ENCODE measurements at regions of chr16 and their contacts with region 1.

Region 1: GRCh38 chr16:67942200-67942509 is 1.8 kb downstream of the LCAT start:
- DNase-seq: peak; percentile 78
- ATAC-seq: peak; percentile 83
- H3K4me3 Mint-ChIP-seq: no peak overlapping the region
- H3K27ac Mint-ChIP-seq: no peak overlapping the region
- H3K4me1 Mint-ChIP-seq: peaks cover 7% of the 10 kb centered on the region
- H3K27me3 Mint-ChIP-seq: no peaks in the 10 kb centered on the region
- CTCF ChIP-seq: peak; percentile 63

Region 2: GRCh38 chr16:67967958-67968399 is 25.8 kb after region 1 on chr16:
- CTCF ChIA-PET with region 1: interaction called, 19 read pairs
- POLR2A ChIA-PET with region 1: no interaction called
- DNase-seq: peak; percentile 38
- ATAC-seq: no peak
- H3K4me3 Mint-ChIP-seq: peak overlapping the region; percentile 97
- H3K27ac Mint-ChIP-seq: peak overlapping the region; percentile 92; the same call in 1 of the 2 replicates
- H3K4me1 Mint-ChIP-seq: peaks cover 44% of the 10 kb centered on the region
- H3K27me3 Mint-ChIP-seq: peaks cover 5% of the 10 kb centered on the region; the same call in 1 of the 2 replicates
- CTCF ChIP-seq: no peak

Region 3: DNA sequence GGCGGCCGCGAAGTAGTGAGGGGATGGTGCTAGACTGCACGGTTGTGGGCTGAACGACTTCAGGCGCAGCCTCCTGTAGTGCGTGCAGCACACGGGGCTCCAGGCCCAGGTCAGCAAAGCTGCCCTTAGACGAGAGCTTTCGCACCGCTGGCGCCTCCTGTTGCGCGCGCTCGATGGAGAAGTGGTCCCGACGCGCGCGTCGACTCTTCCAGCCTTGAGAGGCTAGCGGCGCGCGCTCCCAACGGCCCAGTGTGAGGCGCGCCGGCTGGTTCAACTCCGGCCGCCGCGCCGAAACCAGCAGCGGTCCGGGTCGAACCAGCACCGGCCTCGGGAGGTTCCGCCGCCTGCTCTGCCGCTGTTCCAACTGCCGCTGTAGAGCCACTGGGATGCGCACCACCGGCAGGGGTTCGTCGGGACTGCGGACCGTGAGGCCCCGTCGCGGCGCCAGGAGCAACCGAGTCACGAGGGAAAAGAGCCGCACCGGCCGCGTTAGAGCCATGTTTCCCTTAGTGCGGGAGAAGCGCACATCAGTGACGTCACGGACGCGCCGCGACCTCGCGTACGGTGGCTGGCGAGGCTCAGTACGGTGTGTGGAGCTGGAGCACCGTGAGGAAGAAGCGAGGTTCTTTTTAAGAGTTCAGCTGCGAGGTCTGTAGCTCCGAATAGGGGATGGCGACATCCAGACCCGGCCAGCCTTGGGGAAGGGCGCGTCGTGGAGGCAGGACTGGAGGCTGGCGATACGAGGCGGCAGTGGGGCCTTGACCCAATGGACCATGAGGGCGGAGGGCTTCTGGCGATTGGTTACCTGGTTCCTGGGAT is 80.8 kb after region 1 on chr16 and contains the starts of genes DDX28 and DUS2:
- CTCF ChIA-PET with region 1: interaction called, 17 read pairs
- POLR2A ChIA-PET with region 1: no interaction called
- DNase-seq: peak; percentile 92
- ATAC-seq: peak; percentile 67
- H3K4me3 Mint-ChIP-seq: peak within 1 kb of the TSS; percentile 100
- H3K27ac Mint-ChIP-seq: peak within 1 kb of the TSS; percentile 100
- H3K4me1 Mint-ChIP-seq: peaks cover 15% of the 10 kb centered on the region
- H3K27me3 Mint-ChIP-seq: no peaks in the 10 kb centered on the region; the same call in 1 of the 2 replicates
- CTCF ChIP-seq: no peak
- total RNA-seq, gene DDX28: 15.2 to 18.3 TPM (median 17.7 TPM) in 3 replicates
- total RNA-seq, gene DUS2: 23.5 to 27.9 TPM (median 25.8 TPM) in 3 replicates

Measured in WTC11 (cell line).